ENCODE measurements at regions of chr5 and their contacts with region 1.

Region 1: DNA sequence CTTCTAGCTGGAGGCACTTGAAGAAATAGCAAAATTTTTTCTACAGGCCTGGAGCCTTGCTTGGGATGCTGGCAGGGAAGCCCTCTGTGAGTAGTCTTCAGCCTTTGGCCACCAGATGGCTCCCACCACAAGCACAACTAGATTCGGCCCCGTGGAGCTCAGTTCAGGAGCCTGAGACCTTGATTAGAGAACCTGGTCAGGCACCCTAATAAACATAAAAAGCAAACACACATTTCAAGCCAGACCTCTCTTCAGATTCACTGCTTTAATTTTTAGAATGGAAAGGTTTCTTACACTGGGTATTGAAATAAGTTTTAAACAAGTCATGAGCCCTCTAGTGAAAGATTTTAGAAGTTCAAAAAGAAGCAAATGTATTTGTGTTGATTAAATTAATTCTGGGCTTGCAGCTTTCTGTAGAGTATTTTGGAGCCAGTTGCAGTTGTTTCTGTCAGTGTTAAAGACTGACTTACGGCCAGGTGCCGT is 41.4 kb downstream of the GLRX start:
- DNase-seq: peak; percentile 86
- ATAC-seq: peak; percentile 99
- H3K4me3 ChIP-seq: peak overlapping the region in 1 of 5 experiments; percentile 11
- H3K4me3 Mint-ChIP-seq: peak overlapping the region; percentile 64
- H3K27ac ChIP-seq: no peak overlapping the region
- H3K27ac Mint-ChIP-seq: peak overlapping the region; percentile 11
- H3K4me1 ChIP-seq: peaks cover 0 to 4% of the 10 kb centered on the region in 2 donors
- H3K4me1 Mint-ChIP-seq: peaks cover 5% of the 10 kb centered on the region
- H3K27me3 ChIP-seq: no peaks in the 10 kb centered on the region
- H3K27me3 Mint-ChIP-seq: no peaks in the 10 kb centered on the region
- CTCF ChIP-seq: peak; percentile 96

Region 2: DNA sequence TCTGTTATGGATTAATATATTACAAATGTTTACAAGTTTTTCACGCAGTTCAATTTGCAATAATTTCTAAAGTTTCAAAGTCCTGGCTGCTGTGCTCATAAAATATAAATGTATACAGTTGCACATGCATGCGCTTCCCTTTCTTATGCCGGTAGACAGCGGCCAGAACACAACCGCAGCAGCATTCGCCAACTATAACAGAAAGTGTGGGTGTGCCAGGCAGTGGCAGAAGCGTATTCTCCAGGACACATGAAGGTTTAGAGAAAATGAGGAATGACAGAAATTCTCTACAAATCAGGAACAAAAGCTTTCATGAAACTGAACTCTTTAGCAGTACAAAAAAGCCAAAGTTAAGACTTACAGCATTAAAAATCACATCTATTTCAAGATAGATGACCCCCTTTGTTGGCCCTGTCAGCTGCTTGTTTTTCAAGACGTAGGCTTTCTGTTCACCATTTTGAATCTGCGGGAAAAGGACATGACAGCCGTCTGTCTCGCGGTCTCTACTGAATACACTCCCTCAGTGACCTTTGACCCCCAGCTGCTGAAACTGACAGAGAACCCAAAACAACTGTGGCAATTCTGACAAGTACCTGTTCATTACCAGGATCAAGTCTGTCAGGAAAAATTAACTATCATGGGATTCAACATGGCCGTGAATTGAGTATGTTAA is 910.5 kb before region 1 on chr5:
- CTCF ChIA-PET with region 1: no interaction called
- POLR2A ChIA-PET with region 1: no interaction called
- intact Hi-C with region 1: no loop called
- DNase-seq: no peak
- ATAC-seq: no peak
- H3K4me3 ChIP-seq: no peak overlapping the region
- H3K4me3 Mint-ChIP-seq: no peak overlapping the region
- H3K27ac ChIP-seq: no peak overlapping the region
- H3K27ac Mint-ChIP-seq: no peak overlapping the region
- H3K4me1 ChIP-seq: no peaks in the 10 kb centered on the region
- H3K4me1 Mint-ChIP-seq: no peaks in the 10 kb centered on the region
- H3K27me3 ChIP-seq: no peaks in the 10 kb centered on the region
- H3K27me3 Mint-ChIP-seq: peaks cover 3% of the 10 kb centered on the region
- CTCF ChIP-seq: no peak

Region 3: GRCh38 chr5:95664204-95664786 is 116.8 kb before region 1 on chr5:
- CTCF ChIA-PET with region 1: interaction called, 79 read pairs
- POLR2A ChIA-PET with region 1: no interaction called
- intact Hi-C with region 1: loop called (anchors 1 kb)
- DNase-seq: peak; percentile 56
- ATAC-seq: no peak
- H3K4me3 ChIP-seq: no peak overlapping the region
- H3K4me3 Mint-ChIP-seq: no peak overlapping the region
- H3K27ac ChIP-seq: no peak overlapping the region
- H3K27ac Mint-ChIP-seq: no peak overlapping the region
- H3K4me1 ChIP-seq: no peaks in the 10 kb centered on the region
- H3K4me1 Mint-ChIP-seq: no peaks in the 10 kb centered on the region
- H3K27me3 ChIP-seq: no peaks in the 10 kb centered on the region
- H3K27me3 Mint-ChIP-seq: no peaks in the 10 kb centered on the region
- CTCF ChIP-seq: peak; percentile 95

Region 4: GRCh38 chr5:95770830-95771708 is 10.1 kb before region 1 on chr5:
- CTCF ChIA-PET with region 1: interaction called, 19 read pairs
- POLR2A ChIA-PET with region 1: no interaction called
- intact Hi-C with region 1: no loop called
- DNase-seq: no peak
- ATAC-seq: no peak
- H3K4me3 ChIP-seq: no peak overlapping the region
- H3K4me3 Mint-ChIP-seq: no peak overlapping the region
- H3K27ac ChIP-seq: no peak overlapping the region
- H3K27ac Mint-ChIP-seq: no peak overlapping the region
- H3K4me1 ChIP-seq: no peaks in the 10 kb centered on the region
- H3K4me1 Mint-ChIP-seq: no peaks in the 10 kb centered on the region
- H3K27me3 ChIP-seq: no peaks in the 10 kb centered on the region
- H3K27me3 Mint-ChIP-seq: no peaks in the 10 kb centered on the region
- CTCF ChIP-seq: no peak

Region 5: GRCh38 chr5:95808686-95809413 is 27.7 kb after region 1 on chr5:
- CTCF ChIA-PET with region 1: interaction called, 82 read pairs
- POLR2A ChIA-PET with region 1: no interaction called
- intact Hi-C with region 1: no loop called
- DNase-seq: peak; percentile 95
- ATAC-seq: peak; percentile 100
- H3K4me3 ChIP-seq: peak overlapping the region in 3 of 5 experiments; percentile 27 to 39 (median 33)
- H3K4me3 Mint-ChIP-seq: peak overlapping the region; percentile 86
- H3K27ac ChIP-seq: peak overlapping the region; percentile 81 to 97
- H3K27ac Mint-ChIP-seq: peak overlapping the region; percentile 97
- H3K4me1 ChIP-seq: peaks cover 34 to 37% of the 10 kb centered on the region in 2 donors
- H3K4me1 Mint-ChIP-seq: peaks cover 58% of the 10 kb centered on the region
- H3K27me3 ChIP-seq: no peaks in the 10 kb centered on the region
- H3K27me3 Mint-ChIP-seq: no peaks in the 10 kb centered on the region
- CTCF ChIP-seq: no peak

Region 6: DNA sequence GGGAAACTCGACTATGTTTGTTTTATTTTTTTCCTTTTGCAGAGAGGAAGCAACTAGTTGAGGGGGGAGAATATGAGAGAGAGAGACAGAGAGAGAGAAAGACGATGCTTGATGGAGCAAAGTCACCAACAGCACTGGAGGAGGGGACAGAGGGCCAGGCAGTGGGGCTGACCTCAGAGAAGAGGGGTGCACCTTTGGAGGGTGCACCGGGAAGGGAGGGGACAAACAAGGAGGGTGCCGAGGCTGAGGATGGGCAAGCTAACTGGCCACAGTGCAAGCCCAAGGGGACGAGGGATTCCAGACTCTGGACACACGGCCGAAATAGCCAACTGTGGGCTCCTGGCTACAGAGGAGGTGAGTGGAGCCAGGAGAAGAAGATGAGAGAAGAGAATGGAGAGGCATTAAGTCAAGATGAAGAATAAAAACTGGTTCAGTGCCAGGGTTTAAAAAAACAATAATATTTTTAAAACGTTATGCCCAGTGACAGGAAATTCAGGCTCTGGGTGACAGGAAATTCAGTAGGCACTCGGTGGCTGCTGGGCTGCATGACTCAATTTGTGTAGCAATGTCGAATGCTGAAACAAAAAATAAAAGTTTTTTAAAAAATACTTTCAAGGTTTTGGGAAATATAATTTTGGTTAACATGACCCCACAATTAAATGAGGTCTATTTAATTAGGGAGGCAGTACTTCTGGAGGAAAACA is 54.7 kb after region 1 on chr5:
- CTCF ChIA-PET with region 1: interaction called, 748 read pairs
- POLR2A ChIA-PET with region 1: interaction called, 5 read pairs
- intact Hi-C with region 1: no loop called
- DNase-seq: peak; percentile 35
- ATAC-seq: no peak
- H3K4me3 ChIP-seq: peak overlapping the region; percentile 30 to 82 (median 67)
- H3K4me3 Mint-ChIP-seq: peak overlapping the region; percentile 75
- H3K27ac ChIP-seq: peak overlapping the region; percentile 60 to 86
- H3K27ac Mint-ChIP-seq: peak overlapping the region; percentile 91
- H3K4me1 ChIP-seq: peaks cover 24 to 26% of the 10 kb centered on the region in 2 donors
- H3K4me1 Mint-ChIP-seq: peaks cover 51% of the 10 kb centered on the region
- H3K27me3 ChIP-seq: no peaks in the 10 kb centered on the region
- H3K27me3 Mint-ChIP-seq: no peaks in the 10 kb centered on the region
- CTCF ChIP-seq: no peak

Region 7: DNA sequence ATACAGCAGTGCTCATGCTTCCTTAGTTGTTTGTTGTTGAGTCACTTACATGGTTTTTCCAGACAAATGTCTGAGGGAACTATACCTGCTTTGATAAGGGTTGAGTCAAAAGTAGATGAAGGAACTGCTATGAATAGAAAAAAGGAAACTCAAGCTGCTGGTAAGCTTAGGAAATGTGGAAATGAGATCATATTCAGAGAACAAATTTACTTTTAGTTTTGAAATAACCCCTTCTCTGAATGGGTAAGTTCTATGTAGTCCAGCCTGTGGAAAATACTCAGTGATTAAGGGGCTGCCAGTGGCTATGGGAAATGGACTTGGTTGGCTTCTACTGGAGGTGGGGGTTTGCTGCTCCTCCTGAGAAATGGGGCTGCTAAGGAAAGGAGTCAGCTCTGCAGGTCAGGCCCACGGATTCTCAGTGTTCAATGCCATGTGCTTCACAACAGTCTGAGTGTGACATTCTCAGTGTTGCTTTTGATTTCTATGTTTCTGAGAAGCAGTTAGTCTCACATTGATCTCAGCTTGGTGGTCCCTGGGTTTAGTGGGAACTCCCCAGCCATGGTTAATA is 89.0 kb after region 1 on chr5:
- CTCF ChIA-PET with region 1: interaction called, 14 read pairs
- POLR2A ChIA-PET with region 1: no interaction called
- intact Hi-C with region 1: no loop called
- DNase-seq: peak; percentile 39
- ATAC-seq: no peak
- H3K4me3 ChIP-seq: peak overlapping the region in 1 of 5 experiments; percentile 35
- H3K4me3 Mint-ChIP-seq: peak overlapping the region; percentile 72
- H3K27ac ChIP-seq: peak overlapping the region; percentile 38 to 78
- H3K27ac Mint-ChIP-seq: peak overlapping the region; percentile 89
- H3K4me1 ChIP-seq: peaks cover 25 to 26% of the 10 kb centered on the region in 2 donors
- H3K4me1 Mint-ChIP-seq: peaks cover 30% of the 10 kb centered on the region
- H3K27me3 ChIP-seq: no peaks in the 10 kb centered on the region
- H3K27me3 Mint-ChIP-seq: no peaks in the 10 kb centered on the region
- CTCF ChIP-seq: no peak

Region 8: GRCh38 chr5:95895771-95896170 is 114.6 kb after region 1 on chr5:
- CTCF ChIA-PET with region 1: no interaction called
- POLR2A ChIA-PET with region 1: no interaction called
- intact Hi-C with region 1: no loop called
- DNase-seq: no peak
- ATAC-seq: no peak
- H3K4me3 ChIP-seq: no peak overlapping the region
- H3K4me3 Mint-ChIP-seq: no peak overlapping the region
- H3K27ac ChIP-seq: no peak overlapping the region
- H3K27ac Mint-ChIP-seq: no peak overlapping the region
- H3K4me1 ChIP-seq: no peaks in the 10 kb centered on the region
- H3K4me1 Mint-ChIP-seq: no peaks in the 10 kb centered on the region
- H3K27me3 ChIP-seq: no peaks in the 10 kb centered on the region
- H3K27me3 Mint-ChIP-seq: no peaks in the 10 kb centered on the region
- CTCF ChIP-seq: no peak

Region 9: GRCh38 chr5:96381526-96381925 is 600.4 kb after region 1 on chr5:
- CTCF ChIA-PET with region 1: no interaction called
- POLR2A ChIA-PET with region 1: no interaction called
- intact Hi-C with region 1: no loop called
- DNase-seq: no peak
- ATAC-seq: no peak
- H3K4me3 ChIP-seq: no peak overlapping the region
- H3K4me3 Mint-ChIP-seq: no peak overlapping the region
- H3K27ac ChIP-seq: no peak overlapping the region
- H3K27ac Mint-ChIP-seq: no peak overlapping the region
- H3K4me1 ChIP-seq: no peaks in the 10 kb centered on the region
- H3K4me1 Mint-ChIP-seq: no peaks in the 10 kb centered on the region
- H3K27me3 ChIP-seq: peaks cover 0 to 2% (median 0%) of the 10 kb centered on the region in 4 experiments
- H3K27me3 Mint-ChIP-seq: peaks cover 14% of the 10 kb centered on the region
- CTCF ChIP-seq: no peak